ENCODE measurements at regions of chr3 and their contacts with region 1.

Region 1: GRCh38 chr3:66276705-66277274 is 56.0 kb downstream of the SLC25A26 start:
- DNase-seq: peak; percentile 88
- H3K4me3 ChIP-seq: no peak overlapping the region
- H3K27ac ChIP-seq: no peak overlapping the region
- H3K4me1 ChIP-seq: no peaks in the 10 kb centered on the region
- H3K27me3 ChIP-seq: no peaks in the 10 kb centered on the region
- CTCF ChIP-seq: peak; percentile 38 to 41
- POLR2A ChIP-seq: no peak

Region 2: DNA sequence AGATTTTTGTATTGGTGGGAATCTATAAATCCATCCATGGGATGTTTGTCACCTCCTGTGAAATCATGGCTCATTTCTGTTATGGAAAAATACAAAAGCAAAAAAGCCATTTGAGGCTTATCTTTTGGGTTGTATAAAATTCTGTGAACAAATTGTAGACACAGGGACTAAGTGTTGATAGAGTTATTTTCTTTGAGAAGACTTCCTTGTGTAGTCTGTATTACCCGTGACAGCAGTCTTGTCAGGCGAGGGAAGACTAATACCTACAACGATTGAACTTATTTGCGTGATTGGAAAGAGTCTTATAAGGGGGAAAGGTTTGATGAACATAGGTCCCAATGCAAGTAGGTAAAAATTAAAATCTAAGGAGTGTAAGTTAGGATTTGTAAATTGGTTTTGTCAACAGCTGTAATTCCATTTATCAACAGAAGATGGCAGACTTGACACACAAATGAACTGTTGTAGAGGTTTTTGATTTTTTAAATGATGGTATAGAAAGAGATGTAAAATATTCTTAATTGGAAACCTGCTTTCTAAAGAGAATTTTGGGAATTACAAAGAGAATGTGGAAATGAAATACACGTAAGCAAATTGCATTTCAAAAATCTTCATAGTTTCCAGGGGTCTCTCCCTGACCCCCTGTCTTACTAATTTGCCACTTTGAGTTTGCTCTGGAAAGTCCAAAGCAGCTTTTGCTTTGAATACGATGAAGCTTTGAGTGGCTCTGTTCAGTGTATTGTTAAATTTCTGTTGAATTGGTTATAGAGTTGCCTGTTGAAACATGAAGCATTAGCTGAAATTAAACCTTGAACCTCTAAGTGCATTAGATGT is 22.8 kb before region 1 on chr3:
- CTCF ChIA-PET with region 1: interaction called, 18 read pairs
- POLR2A ChIA-PET with region 1: no interaction called
- dilution Hi-C with region 1: no loop called
- intact Hi-C with region 1: loop called (anchors 1 kb)
- DNase-seq: peak; percentile 65
- H3K4me3 ChIP-seq: no peak overlapping the region
- H3K27ac ChIP-seq: no peak overlapping the region
- H3K4me1 ChIP-seq: peaks cover 6% of the 10 kb centered on the region
- H3K27me3 ChIP-seq: no peaks in the 10 kb centered on the region
- CTCF ChIP-seq: peak; percentile 28 to 41
- POLR2A ChIP-seq: no peak

Region 3: GRCh38 chr3:66378256-66378823 is 101.5 kb after region 1 on chr3:
- CTCF ChIA-PET with region 1: interaction called, 43 read pairs
- POLR2A ChIA-PET with region 1: no interaction called
- dilution Hi-C with region 1: no loop called
- intact Hi-C with region 1: no loop called
- DNase-seq: peak; percentile 49
- H3K4me3 ChIP-seq: no peak overlapping the region
- H3K27ac ChIP-seq: no peak overlapping the region
- H3K4me1 ChIP-seq: peaks cover 10% of the 10 kb centered on the region
- H3K27me3 ChIP-seq: no peaks in the 10 kb centered on the region
- CTCF ChIP-seq: peak; percentile 55 to 62
- POLR2A ChIP-seq: no peak

Region 4: GRCh38 chr3:66400411-66401156 is 123.8 kb after region 1 on chr3:
- CTCF ChIA-PET with region 1: interaction called, 25 read pairs
- POLR2A ChIA-PET with region 1: no interaction called
- dilution Hi-C with region 1: no loop called
- intact Hi-C with region 1: no loop called
- DNase-seq: peak; percentile 65
- H3K4me3 ChIP-seq: no peak overlapping the region
- H3K27ac ChIP-seq: no peak overlapping the region
- H3K4me1 ChIP-seq: peaks cover 10% of the 10 kb centered on the region
- H3K27me3 ChIP-seq: no peaks in the 10 kb centered on the region
- CTCF ChIP-seq: peak in 1 of 2 donors; percentile 11
- POLR2A ChIP-seq: no peak

Region 5: GRCh38 chr3:66816090-66816761 is 539.4 kb after region 1 on chr3:
- CTCF ChIA-PET with region 1: interaction called, 108 read pairs
- POLR2A ChIA-PET with region 1: no interaction called
- dilution Hi-C with region 1: no loop called
- intact Hi-C with region 1: loop called (anchors 1 kb)
- DNase-seq: peak; percentile 64
- H3K4me3 ChIP-seq: no peak overlapping the region
- H3K27ac ChIP-seq: no peak overlapping the region
- H3K4me1 ChIP-seq: no peaks in the 10 kb centered on the region
- H3K27me3 ChIP-seq: peaks cover 17 to 20% of the 10 kb centered on the region in 2 experiments
- CTCF ChIP-seq: peak in 1 of 2 donors; percentile 26
- POLR2A ChIP-seq: no peak

Region 6: GRCh38 chr3:67228141-67228540 is 951.4 kb after region 1 on chr3:
- CTCF ChIA-PET with region 1: no interaction called
- POLR2A ChIA-PET with region 1: no interaction called
- dilution Hi-C with region 1: no loop called
- intact Hi-C with region 1: no loop called
- DNase-seq: no peak
- H3K4me3 ChIP-seq: no peak overlapping the region
- H3K27ac ChIP-seq: no peak overlapping the region
- H3K4me1 ChIP-seq: no peaks in the 10 kb centered on the region
- H3K27me3 ChIP-seq: no peaks in the 10 kb centered on the region
- CTCF ChIP-seq: no peak
- POLR2A ChIP-seq: no peak

Measured in endothelial cell of umbilical vein (primary cell).